Colonic mucosa (tissue), 4 donors: ENCODE measurements at regions of chr14 and their contacts with region 1.

Region 1: DNA sequence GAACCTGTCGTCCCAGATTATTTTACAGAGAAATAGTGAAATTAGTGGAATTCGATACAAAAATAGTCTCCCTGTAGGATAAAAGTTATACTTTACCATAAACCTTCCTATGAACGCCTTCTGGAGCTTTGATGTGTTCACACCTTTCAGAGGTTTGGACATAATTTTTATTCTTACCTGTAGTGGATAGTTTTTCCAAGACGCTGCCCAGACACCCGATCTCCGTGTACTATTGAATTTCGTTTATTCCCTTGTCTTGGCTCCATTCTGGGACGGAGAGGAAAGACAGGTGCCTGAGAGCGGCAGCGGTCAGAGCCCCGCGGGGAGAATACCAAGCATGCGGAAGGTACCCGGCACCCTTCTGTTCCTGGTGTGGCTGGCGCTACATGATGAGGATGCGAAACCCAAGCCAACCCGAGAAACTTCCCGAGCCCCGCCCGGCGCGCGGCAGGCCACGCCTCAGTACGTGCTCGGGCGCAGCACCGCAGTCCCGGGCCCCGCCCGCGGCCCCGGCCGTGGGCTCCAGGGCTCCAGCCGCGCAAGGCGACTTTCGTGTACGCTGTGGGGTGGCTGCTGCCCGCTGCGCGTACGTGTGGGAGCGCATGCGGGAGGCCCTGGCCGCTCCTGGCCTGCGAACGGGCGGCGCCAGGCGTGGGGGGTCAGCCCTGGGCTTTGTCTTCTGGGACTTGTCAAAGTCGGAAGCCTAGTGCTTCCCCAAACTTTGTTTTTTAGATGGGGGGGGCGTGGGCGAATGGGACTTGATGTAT is 11.3 kb upstream of the SNAPC1 start:
- DNase-seq: peak; percentile 93
- H3K4me3 ChIP-seq: peak overlapping the region; percentile 49
- H3K27ac ChIP-seq: peak overlapping the region; percentile 81
- H3K4me1 ChIP-seq: no peaks in the 10 kb centered on the region
- H3K27me3 ChIP-seq: no peaks in the 10 kb centered on the region
- CTCF ChIP-seq: no peak

Region 2: GRCh38 chr14:61695695-61696527 is 55.0 kb before region 1 on chr14:
- intact Hi-C with region 1: loop called (anchors 2 kb)
- DNase-seq: peak; percentile 69
- H3K4me3 ChIP-seq: peak overlapping the region; percentile 91
- H3K27ac ChIP-seq: peak overlapping the region; percentile 95
- H3K4me1 ChIP-seq: peaks cover 10% of the 10 kb centered on the region
- H3K27me3 ChIP-seq: no peaks in the 10 kb centered on the region
- CTCF ChIP-seq: no peak